HEK293T (cell line): ENCODE measurements at regions of chr3 and their contacts with region 1.

Region 1: GRCh38 chr3:9932843-9933560 is 632 bp upstream of the CRELD1 start:
- DNase-seq: peak; percentile 79

Region 2: GRCh38 chr3:9843715-9844438 is 89.1 kb before region 1 on chr3 and contains the start of gene RPUSD3:
- CTCF ChIA-PET with region 1: interaction called, 6 read pairs
- POLR2A ChIA-PET with region 1: interaction called, 14 read pairs
- DNase-seq: peak; percentile 100

Region 3: GRCh38 chr3:9946112-9947024 is 13.4 kb after region 1 on chr3:
- CTCF ChIA-PET with region 1: interaction called, 26 read pairs
- POLR2A ChIA-PET with region 1: interaction called, 52 read pairs
- DNase-seq: peak; percentile 94